GM12878 (cell line): ENCODE measurements at regions of chr12 and their contacts with region 1.

Region 1: GRCh38 chr12:89305373-89305772 is 46.9 kb downstream of the DUSP6 start:
- DNase-seq: no peak
- ATAC-seq: no peak
- H3K4me3 ChIP-seq: no peak overlapping the region
- H3K27ac ChIP-seq: no peak overlapping the region
- H3K4me1 ChIP-seq: no peaks in the 10 kb centered on the region
- H3K27me3 ChIP-seq: no peaks in the 10 kb centered on the region
- CTCF ChIP-seq: no peak
- EP300 ChIP-seq: no peak
- POLR2A ChIP-seq: no peak
- RAD21 ChIP-seq: no peak

Region 2: GRCh38 chr12:89288959-89289358 is 16.4 kb before region 1 on chr12:
- CTCF ChIA-PET with region 1: no interaction called
- POLR2A ChIA-PET with region 1: no interaction called
- RAD21 ChIA-PET with region 1: no interaction called
- SMC1A ChIA-PET with region 1: no interaction called
- in situ Hi-C with region 1: no loop called
- intact Hi-C with region 1: no loop called
- DNase-seq: no peak
- ATAC-seq: no peak
- H3K4me3 ChIP-seq: no peak overlapping the region
- H3K27ac ChIP-seq: no peak overlapping the region
- H3K4me1 ChIP-seq: no peaks in the 10 kb centered on the region
- H3K27me3 ChIP-seq: no peaks in the 10 kb centered on the region
- CTCF ChIP-seq: no peak
- EP300 ChIP-seq: no peak
- POLR2A ChIP-seq: no peak
- RAD21 ChIP-seq: no peak

Region 3: GRCh38 chr12:89316705-89317139 is 11.3 kb after region 1 on chr12:
- CTCF ChIA-PET with region 1: no interaction called
- POLR2A ChIA-PET with region 1: interaction called, 6 read pairs
- RAD21 ChIA-PET with region 1: no interaction called
- SMC1A ChIA-PET with region 1: interaction called, 10 read pairs
- in situ Hi-C with region 1: no loop called
- intact Hi-C with region 1: no loop called
- DNase-seq: no peak
- ATAC-seq: no peak
- H3K4me3 ChIP-seq: no peak overlapping the region
- H3K27ac ChIP-seq: no peak overlapping the region
- H3K4me1 ChIP-seq: no peaks in the 10 kb centered on the region
- H3K27me3 ChIP-seq: no peaks in the 10 kb centered on the region
- CTCF ChIP-seq: no peak
- EP300 ChIP-seq: no peak
- POLR2A ChIP-seq: no peak
- RAD21 ChIP-seq: no peak